Heart left ventricle (tissue), 16 donors: ENCODE measurements at regions of chr5 and their contacts with region 1.

Region 1: GRCh38 chr5:96781031-96781937 is 26.5 kb downstream of the ERAP1 start:
- DNase-seq: no peak
- ATAC-seq: peak in 3 of 4 donors; percentile 21 to 28 (median 24)
- H3K4me3 ChIP-seq: no peak overlapping the region
- H3K27ac ChIP-seq: peak overlapping the region in 8 of 12 donors; percentile 5 to 70 (median 24)
- H3K4me1 ChIP-seq: peaks cover 0 to 40% (median 14%) of the 10 kb centered on the region in 12 donors
- H3K27me3 ChIP-seq: no peaks in the 10 kb centered on the region
- CTCF ChIP-seq: no peak
- POLR2A ChIP-seq: no peak

Region 2: DNA sequence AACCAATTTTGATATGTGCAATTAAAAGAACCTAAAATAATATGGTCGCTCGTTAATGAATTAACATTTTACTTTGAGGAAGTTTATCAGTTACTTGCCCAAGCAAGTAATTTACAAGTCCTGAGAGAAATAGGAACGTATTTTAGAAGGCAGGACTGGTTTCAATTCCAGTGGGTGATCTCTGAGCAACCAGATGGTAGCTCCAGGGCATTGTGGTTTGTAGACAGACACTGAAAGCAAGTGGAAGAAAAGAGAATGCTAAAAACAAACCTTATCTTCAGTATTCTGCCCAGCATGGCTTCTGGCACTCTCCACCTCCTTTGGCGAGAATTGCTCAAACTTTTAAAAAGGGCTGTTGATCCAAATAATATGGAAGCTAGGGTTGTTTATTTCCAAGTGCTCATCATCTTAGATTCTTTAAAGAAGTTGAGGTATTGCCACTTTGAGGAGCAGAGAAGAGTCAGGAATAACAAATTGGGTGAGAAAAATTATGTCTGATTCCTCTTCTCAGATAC is 63.2 kb after region 1 on chr5:
- intact Hi-C with region 1: no loop called
- DNase-seq: no peak
- ATAC-seq: no peak
- H3K4me3 ChIP-seq: no peak overlapping the region
- H3K27ac ChIP-seq: no peak overlapping the region
- H3K4me1 ChIP-seq: no peaks in the 10 kb centered on the region
- H3K27me3 ChIP-seq: no peaks in the 10 kb centered on the region
- CTCF ChIP-seq: no peak
- POLR2A ChIP-seq: no peak

Region 3: DNA sequence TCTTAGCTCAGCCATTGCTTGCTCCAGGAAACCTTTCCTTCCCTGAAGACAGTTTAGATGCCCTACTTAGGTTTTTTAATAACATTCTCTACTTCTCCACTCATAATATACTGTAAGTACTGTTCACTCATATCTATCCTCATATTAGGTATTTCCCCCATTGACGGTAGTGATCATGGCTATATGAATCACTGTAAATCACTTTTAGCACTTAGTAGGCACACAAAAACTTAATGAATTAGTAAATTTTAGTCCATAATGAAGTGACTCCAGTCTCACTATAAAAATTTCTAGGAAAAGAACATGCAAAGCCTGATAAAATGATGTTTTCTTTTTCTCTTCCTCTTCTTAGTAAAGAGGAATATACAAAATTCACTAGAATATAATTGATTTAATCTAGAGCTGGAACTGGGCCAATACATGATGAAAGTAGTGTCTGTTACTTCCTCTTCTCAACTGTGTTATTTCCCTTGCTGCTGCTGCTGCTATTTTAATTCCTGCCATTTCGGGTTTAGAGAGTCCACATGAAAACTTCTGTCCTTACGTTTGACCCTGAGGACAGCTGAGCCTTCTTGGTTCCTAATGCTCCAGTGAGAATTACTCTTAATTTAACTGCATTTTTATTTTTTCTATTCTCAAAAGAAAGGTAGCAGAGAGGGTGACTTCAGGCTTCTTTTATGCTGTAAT is 228.1 kb after region 1 on chr5:
- intact Hi-C with region 1: loop called in 1 of 10 experiments (anchors 10 kb)
- DNase-seq: peak in 1 of 5 donors; percentile 13
- ATAC-seq: peak in 3 of 4 donors; percentile 57 to 60 (median 59)
- H3K4me3 ChIP-seq: no peak overlapping the region
- H3K27ac ChIP-seq: peak overlapping the region in 2 of 12 donors; percentile 25 to 63
- H3K4me1 ChIP-seq: peaks cover 0 to 19% (median 10%) of the 10 kb centered on the region in 12 donors
- H3K27me3 ChIP-seq: no peaks in the 10 kb centered on the region
- CTCF ChIP-seq: no peak
- POLR2A ChIP-seq: no peak